Caco-2 (cell line): ENCODE measurements at regions of chr3 and their contacts with region 1.

Region 1: GRCh38 chr3:47791193-47791855 is 9.6 kb upstream of the SMARCC1 start:
- DNase-seq: no peak
- H3K4me3 ChIP-seq: no peak overlapping the region
- H3K4me3 Mint-ChIP-seq: no peak overlapping the region
- H3K27ac Mint-ChIP-seq: no peak overlapping the region
- H3K4me1 ChIP-seq: no peaks in the 10 kb centered on the region
- H3K4me1 Mint-ChIP-seq: no peaks in the 10 kb centered on the region
- H3K27me3 ChIP-seq: no peaks in the 10 kb centered on the region
- H3K27me3 Mint-ChIP-seq: no peaks in the 10 kb centered on the region
- CTCF ChIP-seq: no peak

Region 2: GRCh38 chr3:47612178-47612577 is 179.1 kb before region 1 on chr3:
- CTCF ChIA-PET with region 1: no interaction called
- POLR2A ChIA-PET with region 1: no interaction called
- intact Hi-C with region 1: loop called (anchors 2 kb)
- DNase-seq: peak in 1 of 2 experiments; percentile 7
- H3K4me3 ChIP-seq: no peak overlapping the region
- H3K4me3 Mint-ChIP-seq: no peak overlapping the region
- H3K27ac Mint-ChIP-seq: peak overlapping the region; percentile 34
- H3K4me1 ChIP-seq: peaks cover 17% of the 10 kb centered on the region
- H3K4me1 Mint-ChIP-seq: peaks cover 10% of the 10 kb centered on the region
- H3K27me3 ChIP-seq: no peaks in the 10 kb centered on the region
- H3K27me3 Mint-ChIP-seq: no peaks in the 10 kb centered on the region
- CTCF ChIP-seq: no peak